ENCODE measurements at regions of chr17 and their contacts with region 1.

Region 1: DNA sequence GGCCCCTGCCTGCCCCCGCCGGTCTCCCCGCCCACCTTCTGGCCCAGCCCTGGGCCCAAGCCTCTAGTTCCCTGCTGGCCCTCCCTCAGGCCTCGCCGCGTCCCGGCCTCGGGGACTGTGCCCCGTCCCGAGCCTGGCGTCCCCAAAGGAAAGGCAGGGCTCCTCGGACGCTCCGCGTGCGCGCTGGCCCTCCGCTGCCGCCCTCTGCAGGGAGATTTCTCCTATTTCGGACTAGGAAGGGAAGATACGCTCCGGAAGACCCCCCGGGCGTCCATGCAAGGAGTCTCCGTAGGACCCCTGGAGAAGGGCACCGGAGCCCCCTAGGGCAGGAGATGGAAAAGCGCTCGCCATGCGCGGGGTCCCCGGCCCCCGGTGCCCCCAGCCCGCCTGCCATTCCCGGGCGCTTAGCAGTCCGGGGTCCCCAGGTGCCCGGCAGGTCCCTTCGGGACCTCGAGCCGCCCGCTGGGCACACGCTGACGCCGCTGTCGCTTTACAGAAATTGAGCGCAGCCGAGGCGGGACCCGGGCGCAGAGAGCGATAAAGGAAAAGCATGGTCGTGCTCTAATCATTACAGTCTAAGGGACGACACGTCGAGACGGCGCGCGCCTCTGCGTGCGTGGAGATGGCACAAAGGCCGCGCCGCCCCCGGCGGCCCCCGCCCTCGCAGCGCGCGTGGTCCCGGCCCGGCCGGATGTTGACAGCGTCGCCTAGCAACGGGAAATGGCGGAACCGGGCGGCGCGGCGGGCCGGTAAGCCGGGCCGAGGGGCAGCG is at the start of gene CCDC40:
- DNase-seq: peak; percentile 50 to 95 (median 70)
- ATAC-seq: peak; percentile 84
- H3K4me3 ChIP-seq: peak within 1 kb of the TSS; percentile 65
- H3K4me3 Mint-ChIP-seq: peak within 1 kb of the TSS; percentile 95
- H3K27ac ChIP-seq: peak within 1 kb of the TSS in 1 of 2 donors; percentile 40
- H3K27ac Mint-ChIP-seq: peak within 1 kb of the TSS; percentile 81
- H3K4me1 ChIP-seq: peaks cover 23% of the 10 kb centered on the region
- H3K4me1 Mint-ChIP-seq: peaks cover 18% of the 10 kb centered on the region
- H3K27me3 ChIP-seq: peaks cover 0 to 13% of the 10 kb centered on the region in 2 experiments
- H3K27me3 Mint-ChIP-seq: peaks cover 4% of the 10 kb centered on the region
- CTCF ChIP-seq: no peak
- total RNA-seq, gene CCDC40: 0.64 to 0.77 TPM

Region 2: DNA sequence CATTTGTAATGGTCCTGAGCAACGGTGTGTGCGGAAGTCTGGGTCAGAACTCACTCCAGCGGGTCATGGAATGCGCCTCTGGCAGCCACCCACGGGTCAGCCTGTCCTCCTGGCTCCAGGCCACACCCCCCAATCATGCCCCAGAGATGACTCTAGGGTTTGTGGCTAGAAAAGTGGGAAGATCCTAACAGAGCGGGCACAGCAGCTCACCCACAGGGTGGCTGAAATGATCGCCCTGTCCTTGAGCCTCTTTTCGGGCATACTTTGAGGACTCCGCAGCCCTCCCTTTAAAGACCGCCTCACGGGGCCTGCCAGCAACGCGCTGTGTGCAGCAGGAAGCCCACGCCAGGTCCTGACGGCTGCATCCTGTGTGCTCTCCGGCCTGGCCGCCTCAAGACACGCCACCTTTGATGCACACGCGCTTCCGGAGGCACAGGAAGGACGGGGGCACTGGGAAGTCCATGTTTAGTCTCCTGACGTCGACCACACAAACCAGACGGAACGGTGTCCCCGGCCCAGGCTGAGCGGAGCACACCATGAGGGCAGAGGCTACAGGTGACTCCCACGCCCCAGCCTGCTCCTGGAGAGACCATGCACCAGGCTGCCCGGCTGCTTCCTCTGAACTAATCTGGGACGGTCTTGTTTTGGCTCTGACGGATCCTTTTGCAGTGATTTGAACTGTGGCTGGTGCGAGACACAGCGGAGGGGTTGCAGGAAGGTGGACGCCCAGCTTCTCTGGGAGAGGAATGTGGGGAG is 93.4 kb before region 1 on chr17:
- CTCF ChIA-PET with region 1: no interaction called
- POLR2A ChIA-PET with region 1: no interaction called
- intact Hi-C with region 1: no loop called
- DNase-seq: peak in 3 of 14 experiments; percentile 26 to 45 (median 30)
- ATAC-seq: peak; percentile 17
- H3K4me3 ChIP-seq: no peak overlapping the region
- H3K4me3 Mint-ChIP-seq: no peak overlapping the region
- H3K27ac ChIP-seq: no peak overlapping the region
- H3K27ac Mint-ChIP-seq: no peak overlapping the region
- H3K4me1 ChIP-seq: peaks cover 13% of the 10 kb centered on the region
- H3K4me1 Mint-ChIP-seq: peaks cover 7% of the 10 kb centered on the region
- H3K27me3 ChIP-seq: no peaks in the 10 kb centered on the region
- H3K27me3 Mint-ChIP-seq: peaks cover under 1% of the 10 kb centered on the region
- CTCF ChIP-seq: no peak

Region 3: GRCh38 chr17:79997011-79997660 is 39.0 kb before region 1 on chr17:
- CTCF ChIA-PET with region 1: no interaction called
- POLR2A ChIA-PET with region 1: interaction called, 4 read pairs
- intact Hi-C with region 1: loop called in 1 of 2 experiments (anchors 5 kb)
- DNase-seq: peak; percentile 45 to 98 (median 66)
- ATAC-seq: peak; percentile 95
- H3K4me3 ChIP-seq: peak overlapping the region; percentile 41
- H3K4me3 Mint-ChIP-seq: peak overlapping the region; percentile 85
- H3K27ac ChIP-seq: peak overlapping the region; percentile 76 to 93
- H3K27ac Mint-ChIP-seq: peak overlapping the region; percentile 87
- H3K4me1 ChIP-seq: peaks cover 58% of the 10 kb centered on the region
- H3K4me1 Mint-ChIP-seq: peaks cover 51% of the 10 kb centered on the region
- H3K27me3 ChIP-seq: no peaks in the 10 kb centered on the region
- H3K27me3 Mint-ChIP-seq: no peaks in the 10 kb centered on the region
- CTCF ChIP-seq: no peak

Region 4: GRCh38 chr17:80008383-80008840 is 27.7 kb before region 1 on chr17:
- CTCF ChIA-PET with region 1: interaction called, 7 read pairs
- POLR2A ChIA-PET with region 1: no interaction called
- intact Hi-C with region 1: loop called in 1 of 2 experiments (anchors 2 kb)
- DNase-seq: peak; percentile 53 to 84 (median 67)
- ATAC-seq: peak; percentile 88
- H3K4me3 ChIP-seq: no peak overlapping the region
- H3K4me3 Mint-ChIP-seq: no peak overlapping the region
- H3K27ac ChIP-seq: no peak overlapping the region
- H3K27ac Mint-ChIP-seq: no peak overlapping the region
- H3K4me1 ChIP-seq: peaks cover 17% of the 10 kb centered on the region
- H3K4me1 Mint-ChIP-seq: peaks cover 8% of the 10 kb centered on the region
- H3K27me3 ChIP-seq: no peaks in the 10 kb centered on the region
- H3K27me3 Mint-ChIP-seq: no peaks in the 10 kb centered on the region
- CTCF ChIP-seq: peak; percentile 81

Region 5: DNA sequence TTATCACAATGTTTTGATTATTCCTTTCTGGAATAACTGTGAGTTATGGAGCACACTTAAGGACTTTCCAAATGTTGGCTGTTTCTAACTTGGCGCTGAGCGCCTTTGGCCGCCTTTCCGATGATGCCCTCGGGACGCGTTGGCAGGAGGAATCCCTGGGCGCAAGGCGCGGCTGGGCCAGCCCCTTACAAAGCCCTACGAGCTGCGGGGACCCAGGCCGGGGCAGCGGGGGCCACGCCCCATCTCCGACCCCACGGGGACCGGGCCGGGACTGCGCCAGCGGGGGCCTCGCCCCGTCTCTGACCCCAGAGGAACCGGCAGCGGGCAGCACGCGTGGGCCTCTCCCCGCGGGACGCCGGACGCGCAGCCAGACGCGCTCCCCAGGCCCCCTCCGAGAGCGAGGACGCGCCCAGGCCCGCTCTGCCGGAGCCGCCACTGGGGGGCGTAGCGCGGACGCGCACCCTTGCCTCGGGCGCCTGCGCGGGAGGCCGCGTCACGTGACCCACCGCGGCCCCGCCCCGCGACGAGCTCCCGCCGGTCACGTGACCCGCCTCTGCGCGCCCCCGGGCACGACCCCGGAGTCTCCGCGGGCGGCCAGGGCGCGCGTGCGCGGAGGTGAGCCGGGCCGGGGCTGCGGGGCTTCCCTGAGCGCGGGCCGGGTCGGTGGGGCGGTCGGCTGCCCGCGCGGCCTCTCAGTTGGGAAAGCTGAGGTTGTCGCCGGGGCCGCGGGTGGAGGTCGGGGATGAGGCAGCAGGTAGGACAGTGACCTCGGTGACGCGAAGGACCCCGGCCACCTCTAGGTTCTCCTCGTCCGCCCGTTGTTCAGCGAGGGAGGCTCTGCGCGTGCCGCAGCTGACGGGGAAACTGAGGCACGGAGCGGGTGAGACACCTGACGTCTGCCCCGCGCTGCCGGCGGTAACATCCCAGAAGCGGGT is 65.1 kb after region 1 on chr17 and contains the start of gene GAA:
- CTCF ChIA-PET with region 1: interaction called, 3 read pairs
- POLR2A ChIA-PET with region 1: no interaction called
- intact Hi-C with region 1: loop called in 1 of 2 experiments (anchors 5 kb)
- DNase-seq: peak; percentile 71 to 95 (median 86)
- ATAC-seq: peak; percentile 83
- H3K4me3 ChIP-seq: peak within 1 kb of the TSS; percentile 99
- H3K4me3 Mint-ChIP-seq: peak within 1 kb of the TSS; percentile 93
- H3K27ac ChIP-seq: peak within 1 kb of the TSS in 1 of 2 donors; percentile 46
- H3K27ac Mint-ChIP-seq: peak within 1 kb of the TSS; percentile 84
- H3K4me1 ChIP-seq: peaks cover 29% of the 10 kb centered on the region
- H3K4me1 Mint-ChIP-seq: peaks cover 35% of the 10 kb centered on the region
- H3K27me3 ChIP-seq: no peaks in the 10 kb centered on the region
- H3K27me3 Mint-ChIP-seq: no peaks in the 10 kb centered on the region
- CTCF ChIP-seq: peak; percentile 64
- total RNA-seq, gene GAA: 22.2 to 22.4 TPM

Region 6: GRCh38 chr17:80147035-80147836 is 111.1 kb after region 1 on chr17 and contains the start of gene EIF4A3:
- CTCF ChIA-PET with region 1: no interaction called
- POLR2A ChIA-PET with region 1: no interaction called
- intact Hi-C with region 1: loop called in 1 of 2 experiments (anchors 2 kb)
- DNase-seq: peak; percentile 91 to 100 (median 95)
- ATAC-seq: peak; percentile 90
- H3K4me3 ChIP-seq: peak within 1 kb of the TSS; percentile 95
- H3K4me3 Mint-ChIP-seq: peak within 1 kb of the TSS; percentile 99
- H3K27ac ChIP-seq: peak within 1 kb of the TSS; percentile 84 to 93
- H3K27ac Mint-ChIP-seq: peak within 1 kb of the TSS; percentile 95
- H3K4me1 ChIP-seq: peaks cover 45% of the 10 kb centered on the region
- H3K4me1 Mint-ChIP-seq: peaks cover 49% of the 10 kb centered on the region
- H3K27me3 ChIP-seq: no peaks in the 10 kb centered on the region
- H3K27me3 Mint-ChIP-seq: no peaks in the 10 kb centered on the region
- CTCF ChIP-seq: no peak
- total RNA-seq, gene EIF4A3: 79.6 to 79.7 TPM